Activated T-helper 1 cell treated with anti-CD3 and anti-CD28 coated beads, Interleukin-12 subunit alpha, Interleukin-12 subunit beta, Interleukin-2, Interleukin-4 antibody, amounts not matched to agents 30 ng/mL and 10 ng/mL and 1 ng/mL, durations not matched to agents 14 hours and 24 hours and 36 hours (primary cell): ENCODE measurements at regions of chr9 and their contacts with region 1.

Region 1: DNA sequence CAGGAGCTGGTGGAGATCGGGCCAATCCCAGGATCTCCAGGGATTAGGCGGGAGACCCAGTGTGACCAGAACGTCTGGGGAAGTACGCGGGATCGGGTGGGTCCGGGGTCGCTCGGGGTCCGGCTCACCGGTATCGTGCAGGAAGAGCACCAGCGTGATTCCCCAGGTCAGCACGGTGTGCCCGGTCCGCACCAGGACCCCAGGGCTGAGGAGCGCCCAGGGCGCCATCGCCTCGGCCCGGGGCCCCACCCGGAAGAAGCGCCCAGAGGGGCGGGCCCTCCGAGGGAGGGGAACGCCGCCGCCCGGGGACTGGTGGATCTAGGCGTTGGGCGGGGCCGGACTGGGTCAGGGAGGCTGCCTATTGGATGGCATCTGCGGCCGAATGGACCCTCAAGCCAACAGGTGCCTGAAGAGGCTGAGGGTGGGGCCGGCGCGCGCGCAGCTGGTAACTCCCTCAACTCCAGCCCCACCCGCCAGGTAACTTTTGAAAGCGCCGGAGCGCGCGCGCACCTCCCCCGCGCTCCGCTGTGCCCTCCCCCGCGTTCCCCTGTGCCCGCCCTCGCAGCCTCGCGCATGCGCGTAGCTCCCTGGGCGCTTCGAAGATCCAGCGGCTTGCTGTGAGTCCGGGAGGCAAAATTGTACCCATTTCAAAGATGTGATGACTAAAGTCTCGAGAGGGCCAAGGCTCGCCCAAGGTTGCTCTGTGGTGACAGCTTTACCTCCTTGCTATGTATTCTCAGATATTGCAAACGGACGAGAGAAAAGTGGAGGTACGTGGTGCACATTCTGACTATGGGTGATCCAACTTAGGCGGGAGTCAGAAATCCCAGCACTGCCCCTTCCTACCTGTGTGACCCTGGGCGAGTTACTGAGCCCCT is at the start of gene ZDHHC12:
- DNase-seq: peak; percentile 99
- H3K4me3 Mint-ChIP-seq: peak within 1 kb of the TSS; percentile 92
- H3K27ac Mint-ChIP-seq: peak within 1 kb of the TSS; percentile 93
- H3K4me1 Mint-ChIP-seq: peaks cover 42% of the 10 kb centered on the region
- H3K27me3 Mint-ChIP-seq: no peaks in the 10 kb centered on the region
- total RNA-seq, gene ZDHHC12: 51.7 and 54.4 TPM in 2 replicates

Region 2: DNA sequence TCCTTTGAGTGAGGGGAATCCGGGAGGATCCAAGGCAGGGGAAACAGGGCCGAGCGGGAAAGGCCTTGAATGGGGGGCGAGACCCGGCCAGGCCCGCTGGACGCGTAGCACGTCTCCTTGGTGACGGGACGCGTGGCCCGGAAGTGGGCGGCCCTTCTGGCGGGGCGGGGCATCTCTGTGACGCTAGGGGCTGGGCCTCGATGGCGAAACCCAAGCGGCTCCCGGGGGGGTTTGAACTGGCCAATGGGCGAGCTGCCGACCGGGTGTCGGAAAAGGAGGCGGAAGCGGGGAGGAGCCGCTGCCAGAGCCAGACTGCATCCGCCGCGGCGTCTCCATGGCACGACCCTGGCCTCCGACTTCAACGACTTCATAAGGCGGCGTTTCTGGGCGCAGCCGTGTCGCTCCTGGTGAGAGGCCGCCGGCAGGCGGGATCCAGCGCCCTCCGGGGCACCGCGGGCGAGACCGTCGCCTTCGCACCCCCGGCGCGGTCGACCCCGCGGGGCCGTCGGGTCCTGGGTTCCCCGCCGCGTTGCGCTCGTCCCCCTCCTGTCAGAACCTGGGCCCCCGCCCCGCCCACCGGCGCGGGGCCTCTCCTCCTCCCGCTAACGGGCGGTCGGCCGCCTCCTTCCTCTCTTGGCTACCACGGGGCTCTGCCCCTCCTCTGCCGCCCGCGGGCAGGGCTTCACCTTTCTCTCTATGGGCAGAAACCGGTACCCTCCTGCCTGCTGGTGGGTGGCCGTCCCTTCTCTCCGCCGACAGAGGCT is 268.1 kb before region 1 on chr9 and contains the start of gene ODF2:
- intact Hi-C with region 1: loop called (anchors 1 kb)
- DNase-seq: peak; percentile 98
- H3K4me3 Mint-ChIP-seq: peak within 1 kb of the TSS; percentile 93
- H3K27ac Mint-ChIP-seq: peak within 1 kb of the TSS; percentile 98
- H3K4me1 Mint-ChIP-seq: peaks cover 13% of the 10 kb centered on the region
- H3K27me3 Mint-ChIP-seq: peaks cover 3% of the 10 kb centered on the region
- total RNA-seq, gene ODF2: 55.6 and 57.6 TPM in 2 replicates

Region 3: GRCh38 chr9:128688512-128689292 is 35.4 kb before region 1 on chr9 and contains the start of gene SET:
- intact Hi-C with region 1: loop called (anchors 1 kb)
- DNase-seq: peak; percentile 93
- H3K4me3 Mint-ChIP-seq: peak within 1 kb of the TSS; percentile 87
- H3K27ac Mint-ChIP-seq: peak within 1 kb of the TSS; percentile 98
- H3K4me1 Mint-ChIP-seq: peaks cover 66% of the 10 kb centered on the region
- H3K27me3 Mint-ChIP-seq: no peaks in the 10 kb centered on the region
- total RNA-seq, gene SET: 775 and 795 TPM in 2 replicates

Region 4: GRCh38 chr9:128771745-128772519 is 47.8 kb after region 1 on chr9 and contains the start of gene ZER1:
- intact Hi-C with region 1: loop called (anchors 1 kb)
- DNase-seq: peak; percentile 92
- H3K4me3 Mint-ChIP-seq: peak within 1 kb of the TSS; percentile 98
- H3K27ac Mint-ChIP-seq: peak within 1 kb of the TSS; percentile 95
- H3K4me1 Mint-ChIP-seq: peaks cover 14% of the 10 kb centered on the region
- H3K27me3 Mint-ChIP-seq: no peaks in the 10 kb centered on the region
- total RNA-seq, gene ZER1: 21.1 and 21.5 TPM in 2 replicates

Region 5: GRCh38 chr9:128792978-128793686 is 69.0 kb after region 1 on chr9:
- intact Hi-C with region 1: no loop called
- DNase-seq: no peak
- H3K4me3 Mint-ChIP-seq: no peak overlapping the region
- H3K27ac Mint-ChIP-seq: no peak overlapping the region
- H3K4me1 Mint-ChIP-seq: peaks cover 11% of the 10 kb centered on the region
- H3K27me3 Mint-ChIP-seq: no peaks in the 10 kb centered on the region

Region 6: GRCh38 chr9:128818099-128818838 is 94.2 kb after region 1 on chr9 and contains the start of gene ENDOG:
- intact Hi-C with region 1: loop called (anchors 1 kb)
- DNase-seq: peak; percentile 99
- H3K4me3 Mint-ChIP-seq: peak within 1 kb of the TSS; percentile 88
- H3K27ac Mint-ChIP-seq: peak within 1 kb of the TSS; percentile 79
- H3K4me1 Mint-ChIP-seq: peaks cover 14% of the 10 kb centered on the region
- H3K27me3 Mint-ChIP-seq: no peaks in the 10 kb centered on the region
- total RNA-seq, gene ENDOG: 22.1 and 26.2 TPM in 2 replicates

Region 7: DNA sequence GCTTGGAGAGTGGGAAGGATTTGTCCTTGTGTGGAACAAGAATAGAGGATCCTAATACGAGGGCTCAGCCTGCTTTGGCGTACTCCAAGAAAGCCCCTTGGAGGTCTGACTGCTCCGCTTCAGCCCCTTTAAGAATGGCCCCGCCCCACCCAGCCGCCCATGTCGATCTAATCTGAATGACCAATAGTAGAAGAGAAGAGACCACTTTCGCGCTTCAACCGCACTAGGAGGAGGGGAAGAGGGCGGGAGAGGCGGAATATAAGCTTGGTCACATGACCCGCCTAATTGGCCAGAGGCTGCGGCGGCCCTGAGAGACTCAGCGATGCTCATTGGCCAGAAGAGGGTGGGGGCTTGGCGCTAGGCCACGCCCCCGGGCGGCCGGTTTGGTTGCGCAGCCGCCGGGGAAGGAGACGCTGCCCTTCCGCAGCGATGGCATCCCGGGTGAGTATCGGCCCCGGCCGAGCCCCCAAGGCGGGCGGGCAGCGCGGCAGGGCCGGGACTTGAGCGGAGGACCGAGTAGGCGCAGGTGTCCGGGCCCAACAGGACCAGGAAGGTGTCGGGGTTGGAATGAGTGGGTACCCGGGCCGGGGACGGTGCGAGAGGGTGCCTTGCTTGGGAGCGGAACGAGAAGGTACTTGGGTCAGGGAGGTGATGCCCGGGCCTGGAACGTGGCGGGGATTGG is 312.3 kb after region 1 on chr9 and contains the start of gene MIGA2:
- intact Hi-C with region 1: loop called (anchors 1 kb)
- DNase-seq: peak; percentile 95
- H3K4me3 Mint-ChIP-seq: peak within 1 kb of the TSS; percentile 97
- H3K27ac Mint-ChIP-seq: peak within 1 kb of the TSS; percentile 79
- H3K4me1 Mint-ChIP-seq: peaks cover 20% of the 10 kb centered on the region
- H3K27me3 Mint-ChIP-seq: peaks cover 2% of the 10 kb centered on the region
- total RNA-seq, gene MIGA2: 43.4 and 43.8 TPM in 2 replicates